Activated B cell treated with CpG ODN at 0.5 μM for 24 hours (primary cell): ENCODE measurements at regions of chr12 and their contacts with region 1.

Region 1: GRCh38 chr12:6735448-6736191 is 11.8 kb downstream of the COPS7A start:
- DNase-seq: no peak
- ATAC-seq: peak; percentile 62
- H3K4me3 Mint-ChIP-seq: no peak overlapping the region
- H3K27ac Mint-ChIP-seq: no peak overlapping the region
- H3K4me1 Mint-ChIP-seq: no peaks in the 10 kb centered on the region
- H3K27me3 Mint-ChIP-seq: no peaks in the 10 kb centered on the region
- CTCF ChIP-seq: no peak

Region 2: DNA sequence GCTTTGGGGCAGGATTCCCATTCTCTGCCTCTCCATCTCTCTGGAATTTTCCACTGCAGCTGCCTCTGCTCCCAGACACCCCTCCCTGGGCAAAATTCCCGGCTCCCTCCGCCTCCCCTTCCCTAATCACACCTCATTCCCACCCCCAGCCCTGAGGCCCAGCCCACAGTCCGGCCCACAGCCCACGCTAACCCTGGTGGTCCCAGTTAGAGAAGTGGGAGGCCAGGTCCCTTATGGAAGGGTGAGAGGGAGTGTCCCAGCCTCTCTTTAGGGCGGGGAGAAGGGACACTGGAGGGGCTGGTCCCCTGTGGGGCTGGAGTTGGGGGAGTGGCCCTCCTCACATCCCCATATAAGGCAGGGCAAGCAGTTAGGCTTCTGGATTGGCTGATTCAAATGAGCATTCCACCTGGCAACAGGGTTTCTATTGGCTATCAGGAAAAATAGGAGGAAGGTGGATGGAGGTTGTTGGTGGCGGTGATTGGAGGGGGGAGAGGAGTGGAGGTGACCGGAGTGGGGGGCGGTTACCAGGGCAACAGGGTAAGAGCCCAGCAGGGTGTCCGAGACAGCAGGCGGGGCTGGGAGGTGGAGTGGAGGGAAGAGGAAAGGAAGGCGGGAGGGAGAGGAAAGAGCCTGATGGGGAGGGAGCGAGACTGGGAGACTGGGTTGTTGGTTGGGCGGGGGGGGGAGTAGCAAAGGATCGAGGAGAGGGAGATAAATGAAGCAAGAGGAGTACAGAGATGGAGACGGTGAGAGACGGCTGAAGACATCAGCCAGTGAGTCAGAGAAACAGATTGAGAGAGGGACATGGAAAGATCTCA is 28.6 kb after region 1 on chr12:
- CTCF ChIA-PET with region 1: interaction called, 3 read pairs
- POLR2A ChIA-PET with region 1: no interaction called
- intact Hi-C with region 1: loop called (anchors 1 kb)
- DNase-seq: peak; percentile 26
- ATAC-seq: peak; percentile 83
- H3K4me3 Mint-ChIP-seq: peak overlapping the region; percentile 55
- H3K27ac Mint-ChIP-seq: no peak overlapping the region
- H3K4me1 Mint-ChIP-seq: peaks cover 29% of the 10 kb centered on the region
- H3K27me3 Mint-ChIP-seq: peaks cover 31% of the 10 kb centered on the region
- CTCF ChIP-seq: no peak

Region 3: GRCh38 chr12:6778574-6779550 is 43.2 kb after region 1 on chr12:
- CTCF ChIA-PET with region 1: interaction called, 3 read pairs
- POLR2A ChIA-PET with region 1: no interaction called
- intact Hi-C with region 1: loop called (anchors 1 kb)
- DNase-seq: peak; percentile 77
- ATAC-seq: peak; percentile 98
- H3K4me3 Mint-ChIP-seq: peak overlapping the region; percentile 74
- H3K27ac Mint-ChIP-seq: peak overlapping the region; percentile 4
- H3K4me1 Mint-ChIP-seq: peaks cover 9% of the 10 kb centered on the region
- H3K27me3 Mint-ChIP-seq: peaks cover 42% of the 10 kb centered on the region
- CTCF ChIP-seq: peak; percentile 68

Region 4: GRCh38 chr12:6825398-6826124 is 89.9 kb after region 1 on chr12:
- CTCF ChIA-PET with region 1: no interaction called
- POLR2A ChIA-PET with region 1: no interaction called
- intact Hi-C with region 1: loop called (anchors 1 kb)
- DNase-seq: peak; percentile 69
- ATAC-seq: peak; percentile 62
- H3K4me3 Mint-ChIP-seq: no peak overlapping the region
- H3K27ac Mint-ChIP-seq: no peak overlapping the region
- H3K4me1 Mint-ChIP-seq: peaks cover 32% of the 10 kb centered on the region
- H3K27me3 Mint-ChIP-seq: peaks cover 73% of the 10 kb centered on the region
- CTCF ChIP-seq: peak; percentile 47

Region 5: DNA sequence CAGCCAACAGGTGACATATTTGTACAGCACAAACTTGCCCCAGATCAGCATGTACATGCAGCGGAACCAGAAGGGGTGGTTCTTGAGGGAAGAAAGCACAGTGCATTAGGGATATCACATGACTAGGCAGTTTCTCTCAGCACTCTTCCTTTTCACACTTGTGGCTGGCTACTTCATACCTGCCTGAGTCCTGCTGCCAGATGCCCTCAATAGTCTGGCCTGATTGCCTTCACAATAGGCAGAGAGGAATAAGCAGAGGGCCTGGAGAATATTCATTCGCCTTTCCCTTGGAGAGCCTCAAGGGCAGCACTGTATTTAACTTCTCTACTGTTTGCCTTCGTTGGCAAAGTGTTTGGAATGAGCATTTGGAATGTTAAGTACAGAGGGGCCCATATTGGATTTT is 243.0 kb after region 1 on chr12:
- CTCF ChIA-PET with region 1: no interaction called
- POLR2A ChIA-PET with region 1: no interaction called
- intact Hi-C with region 1: no loop called
- DNase-seq: no peak
- ATAC-seq: no peak
- H3K4me3 Mint-ChIP-seq: no peak overlapping the region
- H3K27ac Mint-ChIP-seq: no peak overlapping the region
- H3K4me1 Mint-ChIP-seq: no peaks in the 10 kb centered on the region
- H3K27me3 Mint-ChIP-seq: no peaks in the 10 kb centered on the region
- CTCF ChIP-seq: no peak